Heart right ventricle (tissue), 16 donors: ENCODE measurements at regions of chr2 and their contacts with region 1.

Region 1: GRCh38 chr2:32478889-32479623 is 122.2 kb downstream of the BIRC6 start:
- DNase-seq: no peak
- ATAC-seq: no peak
- H3K4me3 ChIP-seq: no peak overlapping the region
- H3K27ac ChIP-seq: no peak overlapping the region
- H3K4me1 ChIP-seq: no peaks in the 10 kb centered on the region
- H3K27me3 ChIP-seq: no peaks in the 10 kb centered on the region
- CTCF ChIP-seq: no peak

Region 2: DNA sequence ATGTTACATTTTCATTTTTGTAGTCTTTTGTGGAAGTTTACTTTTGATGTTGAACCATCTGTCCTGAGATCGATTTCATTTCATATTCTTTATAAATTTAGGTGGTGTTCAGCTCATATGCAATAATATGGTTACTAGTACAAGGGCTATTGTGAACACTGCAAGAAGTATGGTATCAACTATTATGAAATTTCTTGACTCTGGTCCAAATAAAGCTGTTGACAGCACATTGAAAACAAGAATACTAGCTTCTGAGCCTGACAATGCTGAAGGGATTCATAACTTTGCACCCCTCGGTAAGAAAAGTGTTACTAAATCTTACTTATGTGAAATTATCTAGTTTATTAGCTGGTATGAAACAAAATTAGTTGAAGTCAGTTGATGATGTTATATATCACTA is 23.9 kb after region 1 on chr2:
- intact Hi-C with region 1: loop called in 1 of 10 experiments (anchors 1 kb)
- DNase-seq: no peak
- ATAC-seq: no peak
- H3K4me3 ChIP-seq: no peak overlapping the region
- H3K27ac ChIP-seq: no peak overlapping the region
- H3K4me1 ChIP-seq: peaks cover 0 to 7% (median 0%) of the 10 kb centered on the region in 9 donors
- H3K27me3 ChIP-seq: no peaks in the 10 kb centered on the region
- CTCF ChIP-seq: no peak